A673 (cell line): ENCODE measurements at regions of chr3 and their contacts with region 1.

Region 1: GRCh38 chr3:123745184-123745855 is 138.8 kb downstream of the MYLK start:
- DNase-seq: peak; percentile 52
- H3K4me3 ChIP-seq: no peak overlapping the region
- H3K27ac ChIP-seq: no peak overlapping the region
- H3K4me1 ChIP-seq: no peaks in the 10 kb centered on the region
- H3K27me3 ChIP-seq: no peaks in the 10 kb centered on the region
- CTCF ChIP-seq: peak; percentile 59

Region 2: DNA sequence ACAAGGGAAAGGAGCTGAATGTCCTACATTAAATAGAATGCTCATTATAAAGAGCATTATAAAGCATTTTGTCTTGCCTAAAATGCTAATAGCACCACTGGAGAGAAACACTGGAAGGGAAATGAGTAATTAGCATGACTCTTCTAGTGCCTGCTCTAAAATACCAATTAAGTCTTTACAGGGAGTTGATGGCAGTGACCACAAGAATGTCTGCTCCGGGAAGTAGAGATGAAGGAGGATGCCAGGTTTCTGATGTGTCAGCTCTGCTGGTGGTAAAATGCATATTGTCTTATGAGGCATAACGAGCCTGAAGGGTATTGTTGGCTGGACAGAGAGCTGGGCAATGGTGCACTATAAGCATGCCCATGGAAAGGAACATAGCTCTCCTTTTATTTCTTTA is 89.3 kb after region 1 on chr3:
- CTCF ChIA-PET with region 1: no interaction called
- POLR2A ChIA-PET with region 1: no interaction called
- intact Hi-C with region 1: no loop called
- DNase-seq: peak; percentile 73
- H3K4me3 ChIP-seq: no peak overlapping the region
- H3K27ac ChIP-seq: no peak overlapping the region
- H3K4me1 ChIP-seq: no peaks in the 10 kb centered on the region
- H3K27me3 ChIP-seq: no peaks in the 10 kb centered on the region
- CTCF ChIP-seq: no peak

Region 3: GRCh38 chr3:123986427-123986826 is 241.1 kb after region 1 on chr3:
- CTCF ChIA-PET with region 1: no interaction called
- POLR2A ChIA-PET with region 1: no interaction called
- intact Hi-C with region 1: loop called (anchors 10 kb)
- DNase-seq: no peak
- H3K4me3 ChIP-seq: no peak overlapping the region
- H3K27ac ChIP-seq: no peak overlapping the region
- H3K4me1 ChIP-seq: no peaks in the 10 kb centered on the region
- H3K27me3 ChIP-seq: peaks cover 63% of the 10 kb centered on the region
- CTCF ChIP-seq: no peak